Activated CD4-positive, alpha-beta memory T cell treated with anti-CD3 and anti-CD28 coated beads, Interleukin-2, amount 10 ng/mL, durations not matched to agents 7 days and 5 days (primary cell): ENCODE measurements at regions of chr2 and their contacts with region 1.

Region 1: DNA sequence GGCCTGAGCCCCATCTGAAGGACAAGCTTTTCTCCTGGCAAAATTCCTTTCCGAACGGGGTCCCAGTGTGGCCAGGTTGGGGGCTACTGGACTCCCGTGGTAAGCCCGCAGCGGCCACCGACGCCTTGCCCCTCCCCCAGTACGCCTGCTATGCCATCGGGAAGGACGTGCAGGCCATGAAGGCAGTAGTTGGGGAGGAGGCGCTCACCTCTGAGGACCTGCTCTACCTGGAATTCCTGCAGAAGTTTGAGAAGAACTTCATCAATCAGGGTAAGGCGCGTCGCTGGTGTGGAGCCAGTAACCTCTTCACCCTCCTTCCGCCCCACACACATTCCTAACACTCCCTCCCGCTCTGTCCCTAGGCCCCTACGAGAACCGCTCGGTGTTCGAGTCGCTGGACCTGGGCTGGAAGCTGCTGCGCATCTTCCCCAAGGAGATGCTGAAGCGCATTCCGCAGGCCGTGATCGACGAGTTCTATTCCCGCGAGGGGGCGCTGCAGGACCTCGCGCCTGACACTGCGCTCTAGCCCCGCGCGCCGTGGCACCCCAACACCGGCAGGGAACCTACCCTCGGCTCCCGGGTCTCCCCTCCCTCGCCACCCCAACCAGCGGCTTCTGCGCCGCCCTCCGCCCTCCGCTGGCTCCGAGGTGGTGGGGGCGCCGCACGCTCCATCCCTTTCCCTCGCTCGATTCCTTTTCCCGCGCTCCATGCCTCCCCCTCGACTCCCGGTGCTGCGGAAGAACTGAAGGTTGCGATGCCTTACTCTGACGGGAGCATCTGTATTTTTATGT is 13.6 kb upstream of the ANKRD53 start:
- DNase-seq: peak; percentile 82
- H3K4me3 Mint-ChIP-seq: peak overlapping the region; percentile 70
- H3K27ac Mint-ChIP-seq: no peak overlapping the region
- H3K4me1 Mint-ChIP-seq: peaks cover 3% of the 10 kb centered on the region
- H3K27me3 Mint-ChIP-seq: peaks cover 37% of the 10 kb centered on the region

Region 2: DNA sequence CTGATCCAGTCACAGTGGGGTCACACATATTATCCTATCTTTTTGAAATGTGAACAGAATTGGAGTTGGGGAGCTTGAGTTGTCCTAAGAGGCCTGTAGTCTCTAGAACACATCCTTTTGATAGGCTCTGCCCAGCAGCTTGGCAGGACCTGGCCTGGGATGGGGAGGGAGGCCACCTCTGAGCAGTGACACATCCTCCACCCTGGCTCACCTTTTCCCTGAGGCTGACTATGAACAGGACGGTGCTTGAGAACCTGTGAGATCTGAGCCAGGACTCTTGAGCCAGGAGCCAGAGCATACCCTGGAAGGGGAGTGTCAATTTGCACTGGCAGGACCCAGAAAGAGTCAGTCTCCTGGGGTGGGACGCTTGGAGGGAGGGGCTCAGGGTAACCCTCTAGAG is 46.8 kb before region 1 on chr2:
- CTCF ChIA-PET with region 1: no interaction called
- POLR2A ChIA-PET with region 1: no interaction called
- DNase-seq: no peak
- H3K4me3 Mint-ChIP-seq: no peak overlapping the region
- H3K27ac Mint-ChIP-seq: no peak overlapping the region
- H3K4me1 Mint-ChIP-seq: no peaks in the 10 kb centered on the region
- H3K27me3 Mint-ChIP-seq: peaks cover 15% of the 10 kb centered on the region

Region 3: DNA sequence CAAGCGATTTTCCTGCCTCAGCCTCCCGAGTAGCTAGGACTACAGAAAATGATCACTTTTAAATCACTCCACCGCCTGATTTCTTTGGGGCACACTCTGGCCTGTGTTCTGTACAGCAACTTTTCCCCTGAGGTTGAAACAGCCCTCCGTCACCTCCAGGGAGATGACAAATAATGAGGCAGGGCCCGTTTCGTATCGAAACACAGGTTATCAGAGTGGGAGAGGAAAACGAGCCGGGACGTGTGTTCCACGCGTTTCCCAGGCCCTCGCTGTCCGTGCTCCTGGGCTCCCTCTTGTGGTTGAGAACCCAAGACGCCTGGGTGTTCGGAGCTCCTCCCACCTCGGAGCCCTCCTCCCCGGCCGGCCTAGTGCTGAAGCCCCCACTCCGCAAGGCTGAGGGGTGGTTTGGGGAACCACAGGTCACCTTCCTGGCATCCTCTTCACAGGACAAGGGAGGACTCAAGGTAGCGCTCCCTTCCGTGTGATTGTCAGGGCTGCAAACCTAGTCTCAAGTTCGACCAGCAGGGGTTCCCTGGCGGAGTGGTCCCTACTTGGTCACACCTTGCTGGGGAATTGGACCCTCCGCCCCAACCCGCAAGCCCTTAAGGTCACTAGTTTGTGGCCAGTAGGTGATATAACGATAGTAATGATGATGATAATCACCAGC is 16.3 kb before region 1 on chr2:
- CTCF ChIA-PET with region 1: interaction called, 20 read pairs
- POLR2A ChIA-PET with region 1: interaction called, 4 read pairs
- DNase-seq: peak; percentile 73
- H3K4me3 Mint-ChIP-seq: peak overlapping the region; percentile 52
- H3K27ac Mint-ChIP-seq: no peak overlapping the region
- H3K4me1 Mint-ChIP-seq: peaks cover 11% of the 10 kb centered on the region
- H3K27me3 Mint-ChIP-seq: peaks cover 35% of the 10 kb centered on the region

Region 4: GRCh38 chr2:70977605-70978205 is 12.9 kb after region 1 on chr2:
- CTCF ChIA-PET with region 1: interaction called, 37 read pairs
- POLR2A ChIA-PET with region 1: no interaction called
- DNase-seq: peak; percentile 40
- H3K4me3 Mint-ChIP-seq: peak overlapping the region; percentile 68
- H3K27ac Mint-ChIP-seq: peak overlapping the region; percentile 73
- H3K4me1 Mint-ChIP-seq: peaks cover 15% of the 10 kb centered on the region
- H3K27me3 Mint-ChIP-seq: peaks cover 11% of the 10 kb centered on the region

Region 5: GRCh38 chr2:70984576-70985282 is 19.9 kb after region 1 on chr2:
- CTCF ChIA-PET with region 1: interaction called, 37 read pairs
- POLR2A ChIA-PET with region 1: no interaction called
- DNase-seq: peak; percentile 85
- H3K4me3 Mint-ChIP-seq: no peak overlapping the region
- H3K27ac Mint-ChIP-seq: no peak overlapping the region
- H3K4me1 Mint-ChIP-seq: peaks cover 7% of the 10 kb centered on the region
- H3K27me3 Mint-ChIP-seq: no peaks in the 10 kb centered on the region

Region 6: DNA sequence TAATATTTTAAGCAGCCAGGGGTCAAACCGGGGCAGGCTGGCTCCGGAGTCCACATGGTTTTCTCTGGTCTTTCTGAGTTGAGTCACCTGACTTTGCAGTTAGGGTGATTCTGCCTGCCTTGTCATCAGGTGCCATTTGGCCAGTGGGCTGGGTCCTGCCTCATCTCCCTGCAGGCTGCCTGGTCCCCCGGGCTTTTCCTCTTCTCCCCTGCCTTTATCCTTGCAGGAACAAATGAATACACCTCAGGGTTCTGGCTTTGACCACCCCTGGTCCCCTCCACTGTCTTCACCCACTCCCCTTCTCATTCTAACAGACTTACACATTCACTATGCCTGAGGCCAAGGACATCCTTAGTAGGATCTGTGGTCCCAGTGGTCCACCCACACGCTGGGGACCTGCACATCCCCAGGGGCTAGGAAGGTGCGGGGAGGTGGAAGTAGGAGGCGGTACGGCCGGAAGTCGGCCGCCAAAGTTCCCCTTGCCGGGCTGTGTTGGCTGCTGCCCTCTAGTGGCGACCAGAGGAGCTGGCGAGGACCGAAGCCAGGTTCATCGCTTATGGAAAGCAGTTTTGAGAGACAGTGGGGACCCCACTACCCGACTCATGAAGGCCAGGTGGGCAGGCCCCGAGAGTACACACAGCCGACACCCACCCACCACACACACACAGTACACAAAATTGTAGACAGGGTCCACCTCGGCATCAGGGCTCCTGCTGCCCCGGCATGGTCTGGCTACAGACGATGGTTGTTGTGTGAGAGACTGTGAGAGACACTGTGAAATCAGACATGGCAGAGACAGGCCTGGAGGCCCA is 36.2 kb after region 1 on chr2:
- CTCF ChIA-PET with region 1: interaction called, 17 read pairs
- POLR2A ChIA-PET with region 1: no interaction called
- DNase-seq: peak; percentile 83
- H3K4me3 Mint-ChIP-seq: peak overlapping the region; percentile 66
- H3K27ac Mint-ChIP-seq: peak overlapping the region; percentile 73
- H3K4me1 Mint-ChIP-seq: peaks cover 31% of the 10 kb centered on the region
- H3K27me3 Mint-ChIP-seq: no peaks in the 10 kb centered on the region